B cell (primary cell): ENCODE measurements at regions of chr12 and their contacts with region 1.

Region 1: DNA sequence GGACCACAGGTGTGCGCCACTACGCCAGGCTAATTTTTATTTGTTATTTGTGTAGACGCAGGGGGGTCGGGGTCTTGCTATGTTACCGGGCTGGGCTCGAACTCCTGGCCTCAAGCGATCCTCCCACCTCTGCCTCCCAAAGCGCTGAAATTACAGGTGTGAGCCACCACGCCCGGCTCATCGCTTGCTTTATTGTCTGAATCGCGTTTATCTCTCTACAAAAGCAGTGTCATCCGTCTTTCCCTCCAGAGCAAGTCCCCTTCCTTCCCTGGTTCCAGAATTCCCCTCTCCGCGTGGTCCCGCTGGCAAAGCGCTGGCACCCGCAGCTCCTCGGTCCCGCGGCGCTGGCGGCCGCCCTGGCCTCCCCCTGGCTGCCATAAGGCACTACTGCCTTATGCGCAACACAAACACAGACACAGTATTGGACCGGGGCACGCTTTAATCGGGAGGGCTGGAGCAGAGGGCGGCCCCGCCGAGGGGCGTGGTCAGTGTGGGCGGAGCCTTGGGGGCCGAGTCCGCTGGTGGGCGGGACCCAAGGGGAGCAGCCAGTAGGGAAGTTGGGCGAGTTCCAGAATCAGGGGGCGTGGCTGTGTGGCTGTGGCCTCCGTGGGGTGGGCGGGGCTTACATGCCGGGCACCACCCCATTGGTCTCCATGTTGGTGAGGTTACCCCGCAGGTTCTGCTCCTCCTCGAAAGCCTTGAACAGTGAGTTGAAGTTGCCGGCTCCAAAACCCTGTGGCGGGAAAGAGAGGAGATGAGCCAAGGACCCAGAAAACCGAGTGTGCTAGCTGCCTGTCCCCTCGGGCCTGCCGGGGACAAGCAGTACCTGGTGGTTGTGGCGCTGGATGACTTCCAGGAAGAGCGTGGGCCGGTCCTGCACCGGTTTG is 19.3 kb downstream of the HPD start:
- DNase-seq: peak; percentile 99
- ATAC-seq: peak; percentile 99
- H3K4me3 ChIP-seq: peak overlapping the region; percentile 65 to 90 (median 78)
- H3K4me3 Mint-ChIP-seq: peak overlapping the region; percentile 99
- H3K27ac ChIP-seq: peak overlapping the region in 1 of 2 donors; percentile 56
- H3K27ac Mint-ChIP-seq: peak overlapping the region; percentile 91
- H3K4me1 ChIP-seq: peaks cover 7 to 16% of the 10 kb centered on the region in 2 donors
- H3K4me1 Mint-ChIP-seq: peaks cover 18% of the 10 kb centered on the region
- H3K27me3 ChIP-seq: no peaks in the 10 kb centered on the region
- H3K27me3 Mint-ChIP-seq: no peaks in the 10 kb centered on the region
- CTCF ChIP-seq: peak; percentile 13

Region 2: GRCh38 chr12:121688966-121689365 is 150.4 kb before region 1 on chr12:
- CTCF ChIA-PET with region 1: interaction called, 3 read pairs
- POLR2A ChIA-PET with region 1: interaction called, 4 read pairs
- intact Hi-C with region 1: loop called (anchors 1 kb)
- DNase-seq: no peak
- ATAC-seq: no peak
- H3K4me3 ChIP-seq: no peak overlapping the region
- H3K4me3 Mint-ChIP-seq: no peak overlapping the region
- H3K27ac ChIP-seq: no peak overlapping the region
- H3K27ac Mint-ChIP-seq: peak overlapping the region; percentile 10
- H3K4me1 ChIP-seq: peaks cover 4 to 16% of the 10 kb centered on the region in 2 donors
- H3K4me1 Mint-ChIP-seq: peaks cover 8% of the 10 kb centered on the region
- H3K27me3 ChIP-seq: no peaks in the 10 kb centered on the region
- H3K27me3 Mint-ChIP-seq: no peaks in the 10 kb centered on the region
- CTCF ChIP-seq: no peak

Region 3: GRCh38 chr12:121712461-121713256 is 126.7 kb before region 1 on chr12 and contains the start of gene TMEM120B:
- CTCF ChIA-PET with region 1: no interaction called
- POLR2A ChIA-PET with region 1: no interaction called
- intact Hi-C with region 1: loop called (anchors 1 kb)
- DNase-seq: peak; percentile 93
- ATAC-seq: peak; percentile 92
- H3K4me3 ChIP-seq: peak within 1 kb of the TSS; percentile 84 to 97 (median 89)
- H3K4me3 Mint-ChIP-seq: peak within 1 kb of the TSS; percentile 92
- H3K27ac ChIP-seq: peak within 1 kb of the TSS; percentile 48 to 63
- H3K27ac Mint-ChIP-seq: peak within 1 kb of the TSS; percentile 89
- H3K4me1 ChIP-seq: peaks cover 22 to 28% of the 10 kb centered on the region in 2 donors
- H3K4me1 Mint-ChIP-seq: peaks cover 25% of the 10 kb centered on the region
- H3K27me3 ChIP-seq: no peaks in the 10 kb centered on the region
- H3K27me3 Mint-ChIP-seq: no peaks in the 10 kb centered on the region
- CTCF ChIP-seq: no peak
- total RNA-seq, gene TMEM120B: 9.2 and 11.5 TPM in 2 replicates

Region 4: DNA sequence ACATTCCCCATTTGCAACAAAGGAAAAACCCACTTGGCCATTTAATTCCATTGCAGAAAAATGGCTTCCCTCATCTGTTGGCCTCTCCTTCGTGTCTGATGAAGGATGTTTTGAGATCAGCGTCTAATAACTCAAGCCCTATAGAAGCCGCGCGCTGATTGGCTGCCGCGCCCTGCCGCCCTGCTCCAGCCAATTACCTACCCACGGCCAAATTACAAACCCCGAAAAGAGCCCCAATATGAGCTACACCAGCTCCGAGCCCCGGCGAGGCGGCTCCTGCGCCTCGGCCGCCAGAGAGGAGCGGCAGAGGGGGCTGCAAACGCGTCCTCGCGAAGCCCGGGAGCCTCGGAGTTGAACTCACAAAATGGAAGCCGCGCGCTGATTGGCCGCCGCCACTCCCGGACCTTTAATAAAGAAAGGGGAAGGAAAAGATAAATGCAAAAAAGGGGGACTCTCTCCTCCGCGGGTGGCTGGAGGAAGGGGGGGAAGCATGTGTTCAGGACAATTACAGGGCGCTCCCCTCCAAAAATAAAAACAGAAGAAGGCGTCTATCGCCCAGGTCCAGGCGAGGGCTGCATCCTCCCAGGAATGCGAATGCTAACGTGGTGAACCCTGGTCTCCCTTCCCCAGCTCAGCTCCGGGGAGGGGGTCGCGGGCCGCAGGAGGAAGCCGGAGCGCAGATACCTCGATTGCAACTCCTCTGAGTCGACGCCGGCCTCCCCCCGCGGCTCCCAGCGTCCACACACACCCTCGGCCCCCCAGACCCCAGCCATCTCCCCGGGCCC is 36.3 kb before region 1 on chr12:
- CTCF ChIA-PET with region 1: interaction called, 4 read pairs
- POLR2A ChIA-PET with region 1: interaction called, 3 read pairs
- intact Hi-C with region 1: loop called (anchors 1 kb)
- DNase-seq: peak; percentile 98
- ATAC-seq: peak; percentile 51
- H3K4me3 ChIP-seq: peak overlapping the region; percentile 79 to 95 (median 89)
- H3K4me3 Mint-ChIP-seq: peak overlapping the region; percentile 90
- H3K27ac ChIP-seq: peak overlapping the region; percentile 97
- H3K27ac Mint-ChIP-seq: peak overlapping the region; percentile 98
- H3K4me1 ChIP-seq: peaks cover 33 to 53% of the 10 kb centered on the region in 2 donors
- H3K4me1 Mint-ChIP-seq: peaks cover 50% of the 10 kb centered on the region
- H3K27me3 ChIP-seq: no peaks in the 10 kb centered on the region
- H3K27me3 Mint-ChIP-seq: no peaks in the 10 kb centered on the region
- CTCF ChIP-seq: no peak

Region 5: DNA sequence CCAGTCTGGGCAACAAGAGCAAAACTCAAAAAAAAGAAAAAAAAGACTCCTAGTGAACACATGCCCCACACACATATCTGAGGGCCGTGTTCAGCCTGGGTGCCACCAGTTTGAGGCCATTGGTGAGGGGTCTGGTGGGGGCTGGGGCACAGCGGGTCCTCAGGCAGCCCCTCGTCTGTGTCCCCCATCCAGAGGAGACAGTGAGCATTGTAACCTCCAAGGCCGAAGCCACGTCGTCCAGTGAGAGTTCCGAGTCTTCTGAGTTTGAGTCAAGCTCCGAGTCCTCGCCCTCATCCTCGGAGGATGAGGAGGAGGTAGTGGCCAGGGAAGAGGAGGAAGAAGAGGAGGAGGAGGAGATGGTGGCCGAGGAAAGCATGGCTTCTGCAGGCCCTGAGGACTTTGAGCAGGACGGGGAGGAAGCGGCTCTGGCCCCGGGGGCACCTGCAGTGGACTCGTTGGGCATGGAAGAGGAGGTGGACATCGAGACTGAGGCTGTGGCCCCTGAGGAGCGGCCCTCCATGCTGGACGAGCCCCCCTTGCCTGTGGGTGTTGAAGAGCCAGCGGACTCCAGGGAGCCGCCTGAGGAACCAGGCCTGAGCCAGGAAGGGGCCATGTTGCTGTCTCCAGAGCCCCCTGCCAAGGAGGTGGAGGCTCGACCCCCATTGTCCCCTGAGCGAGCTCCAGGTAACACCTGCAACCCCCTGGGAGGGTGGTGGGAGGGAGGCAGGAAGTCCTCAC is 20.0 kb before region 1 on chr12:
- CTCF ChIA-PET with region 1: no interaction called
- POLR2A ChIA-PET with region 1: no interaction called
- intact Hi-C with region 1: no loop called
- DNase-seq: no peak
- ATAC-seq: no peak
- H3K4me3 ChIP-seq: no peak overlapping the region
- H3K4me3 Mint-ChIP-seq: no peak overlapping the region
- H3K27ac ChIP-seq: no peak overlapping the region
- H3K27ac Mint-ChIP-seq: peak overlapping the region; percentile 63
- H3K4me1 ChIP-seq: no peaks in the 10 kb centered on the region
- H3K4me1 Mint-ChIP-seq: no peaks in the 10 kb centered on the region
- H3K27me3 ChIP-seq: no peaks in the 10 kb centered on the region
- H3K27me3 Mint-ChIP-seq: no peaks in the 10 kb centered on the region
- CTCF ChIP-seq: no peak

Region 6: DNA sequence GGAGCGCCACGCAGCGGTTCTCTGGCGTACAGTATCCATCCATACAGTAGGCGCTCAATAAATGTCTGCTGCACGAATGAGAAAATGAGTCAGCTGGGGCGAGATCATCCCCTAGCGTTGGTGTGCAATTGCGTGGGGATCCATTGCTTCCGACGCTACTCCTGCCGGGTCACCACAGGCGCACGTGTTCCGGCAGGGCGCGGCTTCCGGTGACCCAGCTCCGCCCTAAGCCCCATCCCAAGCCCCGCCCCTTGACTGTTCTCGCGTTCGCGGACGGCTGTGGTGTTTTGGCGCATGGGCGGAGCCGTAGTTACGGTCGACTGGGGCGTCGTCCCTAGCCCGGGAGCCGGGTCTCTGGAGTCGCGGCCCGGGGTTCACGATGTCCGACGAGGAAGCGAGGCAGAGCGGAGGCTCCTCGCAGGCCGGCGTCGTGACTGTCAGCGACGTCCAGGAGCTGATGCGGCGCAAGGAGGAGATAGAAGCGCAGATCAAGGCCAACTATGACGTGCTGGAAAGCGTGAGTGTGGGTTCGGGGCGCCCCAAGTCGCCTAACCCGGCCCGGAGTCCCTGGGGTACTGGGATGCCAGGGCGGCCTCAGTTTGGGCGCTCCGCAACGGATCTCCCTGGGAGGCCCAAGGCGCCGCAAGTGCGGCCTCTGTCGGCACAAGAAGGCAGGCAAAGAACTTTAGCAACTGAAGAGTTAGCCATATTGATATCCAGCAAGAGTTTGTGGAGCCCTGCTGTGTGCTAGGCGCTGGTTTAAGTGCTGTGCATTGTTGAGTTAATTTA is 49.3 kb after region 1 on chr12 and contains the start of gene PSMD9:
- CTCF ChIA-PET with region 1: interaction called, 4 read pairs
- POLR2A ChIA-PET with region 1: interaction called, 5 read pairs
- intact Hi-C with region 1: loop called (anchors 1 kb)
- DNase-seq: peak; percentile 98
- ATAC-seq: peak; percentile 96
- H3K4me3 ChIP-seq: peak within 1 kb of the TSS; percentile 70 to 92 (median 78)
- H3K4me3 Mint-ChIP-seq: peak within 1 kb of the TSS; percentile 99
- H3K27ac ChIP-seq: peak within 1 kb of the TSS; percentile 86 to 95
- H3K27ac Mint-ChIP-seq: peak within 1 kb of the TSS; percentile 99
- H3K4me1 ChIP-seq: peaks cover 15 to 19% of the 10 kb centered on the region in 2 donors
- H3K4me1 Mint-ChIP-seq: peaks cover 32% of the 10 kb centered on the region
- H3K27me3 ChIP-seq: peaks cover 0 to 5% (median 0%) of the 10 kb centered on the region in 4 experiments
- H3K27me3 Mint-ChIP-seq: no peaks in the 10 kb centered on the region
- CTCF ChIP-seq: peak; percentile 68
- total RNA-seq, gene PSMD9: 37.1 and 38.2 TPM in 2 replicates

Region 7: DNA sequence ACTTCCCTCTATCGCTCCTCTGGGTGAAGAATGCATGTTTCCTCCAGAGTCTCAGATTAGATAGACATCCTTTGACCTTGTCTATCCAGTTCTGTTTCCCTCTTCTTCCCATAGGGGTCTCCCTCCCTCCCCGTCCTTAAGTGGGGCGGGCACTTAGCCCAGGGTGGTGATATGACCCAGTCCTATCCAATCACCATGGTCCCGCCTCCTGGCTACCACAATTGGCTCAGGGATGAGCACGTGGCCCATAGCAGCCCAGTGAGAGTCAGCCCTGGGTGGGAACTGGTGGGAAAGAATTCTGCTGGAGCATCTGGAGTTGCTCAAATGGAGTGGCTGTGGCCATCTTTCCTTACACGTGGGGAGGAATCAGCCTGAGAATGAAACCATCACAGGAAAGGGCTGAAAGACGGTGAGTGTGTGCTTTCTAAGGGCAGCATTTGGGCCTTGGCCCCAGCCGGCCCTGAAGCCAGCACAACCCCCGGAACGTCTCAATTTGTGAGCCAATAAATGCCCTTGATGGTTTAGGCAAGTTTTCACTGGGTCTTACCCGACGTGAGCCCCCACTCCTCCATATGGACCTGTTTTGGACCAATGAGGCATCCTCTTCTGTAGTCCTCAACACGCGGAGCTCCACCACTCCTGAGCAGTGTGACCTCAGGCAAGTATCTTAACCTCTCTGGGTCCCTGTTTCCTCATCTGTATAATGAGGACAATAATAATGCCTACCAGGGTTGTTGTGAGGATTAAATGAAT is 224.9 kb after region 1 on chr12:
- CTCF ChIA-PET with region 1: no interaction called
- POLR2A ChIA-PET with region 1: no interaction called
- intact Hi-C with region 1: no loop called
- DNase-seq: peak; percentile 58
- ATAC-seq: peak; percentile 66
- H3K4me3 ChIP-seq: no peak overlapping the region
- H3K4me3 Mint-ChIP-seq: no peak overlapping the region
- H3K27ac ChIP-seq: no peak overlapping the region
- H3K27ac Mint-ChIP-seq: peak overlapping the region; percentile 65
- H3K4me1 ChIP-seq: peaks cover 30 to 49% of the 10 kb centered on the region in 2 donors
- H3K4me1 Mint-ChIP-seq: peaks cover 47% of the 10 kb centered on the region
- H3K27me3 ChIP-seq: no peaks in the 10 kb centered on the region
- H3K27me3 Mint-ChIP-seq: no peaks in the 10 kb centered on the region
- CTCF ChIP-seq: no peak